ENCODE measurements at regions of chr2 and their contacts with region 1.

Region 1: DNA sequence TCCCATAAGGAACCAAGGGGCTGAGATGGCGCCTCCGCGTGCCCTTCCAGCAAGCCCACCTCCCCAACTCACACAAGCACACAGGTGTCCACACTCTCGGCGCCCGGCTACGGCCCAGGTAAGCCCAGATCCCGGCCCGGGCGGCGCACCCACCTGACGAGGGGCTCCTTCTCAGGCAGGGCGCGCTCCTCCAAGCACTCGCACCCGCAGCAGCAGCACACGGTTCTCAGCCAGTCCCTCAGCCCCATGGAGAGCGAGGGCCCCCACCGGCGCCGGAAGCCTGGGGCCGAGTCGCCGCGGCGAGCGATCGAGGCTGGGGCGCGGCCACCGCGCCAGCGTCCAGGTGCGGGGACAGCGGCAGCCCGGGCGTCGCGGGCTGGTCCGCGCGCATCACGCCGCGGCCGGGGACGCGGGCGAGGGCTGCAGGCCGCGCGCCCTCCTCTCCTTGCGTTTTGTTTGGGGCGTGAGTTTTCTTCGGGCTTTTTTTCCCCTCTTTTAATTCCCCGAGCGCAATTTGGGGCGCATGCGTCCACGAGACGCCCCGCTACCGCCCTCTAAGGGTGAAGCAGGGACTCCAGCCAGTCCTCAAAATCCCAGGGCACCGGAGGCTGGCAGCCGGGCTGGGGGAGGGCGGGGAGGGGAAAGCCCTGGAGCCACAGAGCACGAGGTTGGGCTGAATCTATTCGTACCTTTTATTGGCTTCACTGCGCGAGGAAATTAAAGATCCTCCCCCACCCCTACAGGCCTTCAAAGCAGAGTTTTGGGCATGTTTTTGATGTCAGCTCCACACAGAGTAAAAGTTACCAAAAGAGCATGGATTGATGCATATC is at the start of gene MREG:
- DNase-seq: peak; percentile 61 to 73
- H3K4me3 ChIP-seq: peak within 1 kb of the TSS; percentile 59 to 71
- H3K27ac ChIP-seq: peak within 1 kb of the TSS; percentile 33 to 51
- H3K4me1 ChIP-seq: peaks cover 0 to 8% (median 3%) of the 10 kb centered on the region in 4 donors
- H3K27me3 ChIP-seq: no peaks in the 10 kb centered on the region
- CTCF ChIP-seq: peak; percentile 45 to 73

Region 2: GRCh38 chr2:215900203-215900611 is 113.1 kb before region 1 on chr2:
- intact Hi-C with region 1: no loop called
- DNase-seq: peak; percentile 53 to 72
- H3K4me3 ChIP-seq: no peak overlapping the region
- H3K27ac ChIP-seq: no peak overlapping the region
- H3K4me1 ChIP-seq: peaks cover 0 to 21% (median 0%) of the 10 kb centered on the region in 4 donors
- H3K27me3 ChIP-seq: no peaks in the 10 kb centered on the region
- CTCF ChIP-seq: no peak

Region 3: GRCh38 chr2:215949991-215950404 is 63.3 kb before region 1 on chr2:
- intact Hi-C with region 1: loop called (anchors 10 kb)
- DNase-seq: no peak
- H3K4me3 ChIP-seq: no peak overlapping the region
- H3K27ac ChIP-seq: no peak overlapping the region
- H3K4me1 ChIP-seq: no peaks in the 10 kb centered on the region
- H3K27me3 ChIP-seq: no peaks in the 10 kb centered on the region
- CTCF ChIP-seq: peak; percentile 39 to 50

Region 4: GRCh38 chr2:216098421-216099334 is 85.4 kb after region 1 on chr2:
- intact Hi-C with region 1: no loop called
- DNase-seq: no peak
- H3K4me3 ChIP-seq: no peak overlapping the region
- H3K27ac ChIP-seq: no peak overlapping the region
- H3K4me1 ChIP-seq: no peaks in the 10 kb centered on the region
- H3K27me3 ChIP-seq: peaks cover 0 to 5% of the 10 kb centered on the region in 2 donors
- CTCF ChIP-seq: no peak

Region 5: DNA sequence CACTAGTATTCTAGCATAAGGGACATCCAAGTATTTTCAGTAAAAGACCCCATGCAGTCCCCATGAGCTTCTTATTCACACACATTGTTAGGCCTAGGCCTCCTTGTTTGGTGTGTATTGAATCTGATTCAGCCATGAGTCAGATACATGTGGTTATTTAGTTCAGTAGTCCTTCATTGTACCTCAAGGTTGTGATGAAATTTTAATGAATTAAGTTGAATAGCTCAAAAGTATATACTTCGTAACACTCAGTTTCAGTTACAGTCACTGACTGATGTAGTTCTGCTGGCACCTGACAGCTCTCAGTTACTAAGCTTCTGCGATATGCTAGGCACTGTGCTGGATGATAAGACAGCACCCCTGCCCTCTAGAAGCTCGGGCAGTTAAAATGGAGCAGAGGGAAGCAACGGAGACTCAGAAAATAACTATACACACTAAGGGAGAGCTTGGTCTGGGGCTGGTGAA is 182.3 kb after region 1 on chr2:
- intact Hi-C with region 1: no loop called
- DNase-seq: no peak
- H3K4me3 ChIP-seq: no peak overlapping the region
- H3K27ac ChIP-seq: no peak overlapping the region
- H3K4me1 ChIP-seq: no peaks in the 10 kb centered on the region
- H3K27me3 ChIP-seq: no peaks in the 10 kb centered on the region
- CTCF ChIP-seq: no peak